Prostate gland (tissue), 2 donors: ENCODE measurements at regions of chrX and their contacts with region 1.

Region 1: GRCh38 chrX:8738588-8739189 is 6.8 kb upstream of the ANOS1 start:
- DNase-seq: peak; percentile 27
- H3K4me3 ChIP-seq: no peak overlapping the region
- H3K27ac ChIP-seq: no peak overlapping the region
- H3K4me1 ChIP-seq: no peaks in the 10 kb centered on the region
- H3K27me3 ChIP-seq: no peaks in the 10 kb centered on the region
- CTCF ChIP-seq: peak in 3 of 4 experiments; percentile 58 to 63 (median 59)
- POLR2A ChIP-seq: no peak

Region 2: GRCh38 chrX:7996414-7996813 is 742.3 kb before region 1 on chrX:
- intact Hi-C with region 1: loop called (anchors 5 kb)
- DNase-seq: no peak
- H3K4me3 ChIP-seq: no peak overlapping the region
- H3K27ac ChIP-seq: no peak overlapping the region
- H3K4me1 ChIP-seq: no peaks in the 10 kb centered on the region
- H3K27me3 ChIP-seq: no peaks in the 10 kb centered on the region
- CTCF ChIP-seq: peak in 3 of 4 experiments; percentile 37 to 64 (median 53)
- POLR2A ChIP-seq: no peak

Region 3: DNA sequence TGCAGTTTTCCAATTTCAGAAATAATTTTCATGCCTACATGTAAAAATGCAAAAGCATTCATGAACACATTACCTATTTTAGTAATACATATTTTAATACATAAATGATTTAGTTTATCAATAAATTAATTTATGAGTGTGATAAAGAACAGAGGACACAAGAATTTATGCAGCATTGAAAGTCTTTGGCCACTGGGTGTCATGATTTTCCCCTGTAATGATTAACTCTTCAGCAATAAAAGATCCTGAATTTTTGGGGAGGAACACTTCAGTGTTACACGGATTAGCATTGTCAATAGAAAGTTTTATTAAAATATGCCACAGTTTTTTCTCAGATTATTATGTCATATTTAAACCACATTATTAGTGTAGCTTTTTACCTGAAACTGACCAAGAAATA is 559.0 kb before region 1 on chrX:
- intact Hi-C with region 1: loop called (anchors 10 kb)
- DNase-seq: no peak
- H3K4me3 ChIP-seq: no peak overlapping the region
- H3K27ac ChIP-seq: no peak overlapping the region
- H3K4me1 ChIP-seq: no peaks in the 10 kb centered on the region
- H3K27me3 ChIP-seq: no peaks in the 10 kb centered on the region
- CTCF ChIP-seq: peak in 2 of 4 experiments; percentile 27 to 30
- POLR2A ChIP-seq: no peak